Activated CD4-positive, alpha-beta T cell treated with anti-CD3 and anti-CD28 coated beads for 36 hours (primary cell): ENCODE measurements at regions of chr5 and their contacts with region 1.

Region 1: GRCh38 chr5:138654281-138654867 is 79.2 kb upstream of the HSPA9 start:
- DNase-seq: peak; percentile 81
- ATAC-seq: peak; percentile 97
- H3K4me3 Mint-ChIP-seq: no peak overlapping the region
- H3K27ac Mint-ChIP-seq: peak overlapping the region; percentile 28
- H3K4me1 Mint-ChIP-seq: peaks cover 24% of the 10 kb centered on the region
- H3K27me3 Mint-ChIP-seq: peaks cover 72% of the 10 kb centered on the region

Region 2: DNA sequence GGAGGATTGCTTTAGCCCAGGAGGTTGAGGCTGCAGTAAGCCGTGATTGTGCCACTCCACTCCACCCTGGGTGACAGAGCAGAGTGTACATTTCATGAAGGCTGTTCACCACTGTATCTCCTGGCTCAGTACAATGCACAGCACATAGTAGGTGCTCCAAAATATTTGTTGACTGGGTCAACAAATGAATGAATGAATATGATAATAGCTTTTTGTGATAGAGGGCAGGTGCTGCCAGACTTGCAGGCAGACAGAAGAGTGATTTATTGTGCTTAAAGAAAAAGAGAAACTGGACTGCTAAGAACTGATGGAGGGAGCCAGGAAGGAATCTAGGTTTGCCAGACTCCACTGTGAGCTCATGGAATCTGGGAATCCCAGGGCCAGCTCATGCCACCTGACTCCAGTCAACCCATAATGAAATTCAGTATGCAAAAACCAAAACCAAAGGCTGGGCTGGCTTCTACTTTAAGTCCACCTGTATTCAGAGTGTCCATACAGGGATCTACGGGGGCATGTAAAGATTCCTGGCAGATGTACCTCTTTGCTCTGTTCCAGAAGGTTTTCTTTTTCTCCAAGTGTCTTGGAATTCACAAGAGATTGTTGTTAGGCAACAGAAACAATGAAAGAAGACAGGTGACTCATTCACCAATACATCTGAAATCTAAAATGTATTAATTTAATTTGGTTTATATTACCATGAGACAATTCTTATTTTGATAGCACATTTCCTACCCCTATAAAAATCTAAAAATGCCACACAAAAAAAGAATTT is 83.3 kb after region 1 on chr5:
- CTCF ChIA-PET with region 1: no interaction called
- POLR2A ChIA-PET with region 1: interaction called, 10 read pairs
- intact Hi-C with region 1: loop called (anchors 2 to 5 kb)
- DNase-seq: no peak
- ATAC-seq: no peak
- H3K4me3 Mint-ChIP-seq: no peak overlapping the region
- H3K27ac Mint-ChIP-seq: no peak overlapping the region
- H3K4me1 Mint-ChIP-seq: peaks cover 33% of the 10 kb centered on the region
- H3K27me3 Mint-ChIP-seq: peaks cover 12% of the 10 kb centered on the region

Region 3: GRCh38 chr5:138743506-138743905 is 89.1 kb after region 1 on chr5:
- CTCF ChIA-PET with region 1: no interaction called
- POLR2A ChIA-PET with region 1: interaction called, 10 read pairs
- intact Hi-C with region 1: loop called (anchors 2 to 5 kb)
- DNase-seq: no peak
- ATAC-seq: no peak
- H3K4me3 Mint-ChIP-seq: no peak overlapping the region
- H3K27ac Mint-ChIP-seq: no peak overlapping the region
- H3K4me1 Mint-ChIP-seq: peaks cover 25% of the 10 kb centered on the region
- H3K27me3 Mint-ChIP-seq: peaks cover 6% of the 10 kb centered on the region

Region 4: DNA sequence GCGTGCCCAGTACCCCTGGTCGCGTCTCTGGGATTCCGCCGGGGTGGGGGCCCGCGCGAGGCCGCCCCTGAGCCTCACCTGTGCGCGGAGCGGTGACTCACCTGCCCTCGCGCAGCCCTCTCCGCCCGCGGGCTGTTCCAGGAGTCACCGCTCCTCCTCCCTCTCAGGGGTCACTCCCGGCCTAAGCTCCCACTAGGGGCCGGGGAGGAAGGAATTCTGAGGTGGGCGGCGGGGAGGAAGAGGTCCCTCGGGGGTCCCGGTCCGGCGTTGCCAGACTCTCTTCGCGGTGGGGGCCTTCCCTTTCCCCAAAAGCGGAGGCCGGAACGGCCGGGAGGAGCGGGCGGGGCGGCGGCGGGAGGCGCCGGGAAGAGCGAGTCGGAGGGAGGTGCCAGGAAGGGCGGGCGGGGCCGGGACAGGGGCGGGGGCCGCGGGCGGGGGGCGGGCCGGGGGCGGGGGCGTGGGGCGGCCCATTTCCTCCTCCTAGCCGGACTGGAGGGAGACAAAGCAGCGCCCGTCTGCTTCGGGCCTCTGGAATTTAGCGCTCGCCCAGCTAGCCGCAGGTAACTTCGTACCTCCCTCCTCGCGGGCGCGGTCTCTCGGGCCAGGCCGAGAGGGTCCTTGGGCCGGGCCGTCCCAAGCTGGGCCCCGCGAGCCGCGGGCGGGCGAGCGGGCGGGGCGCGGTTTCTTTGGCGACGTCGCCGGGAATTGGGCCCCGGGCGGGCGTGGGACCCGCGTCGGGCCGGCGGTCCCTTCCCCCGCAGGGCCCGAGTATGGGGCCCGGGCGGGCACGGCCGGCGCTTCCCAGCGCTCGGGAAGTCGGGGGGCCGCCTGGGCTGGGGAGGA is 98.8 kb after region 1 on chr5 and contains the start of gene CTNNA1:
- CTCF ChIA-PET with region 1: no interaction called
- POLR2A ChIA-PET with region 1: no interaction called
- intact Hi-C with region 1: loop called in 1 of 2 experiments (anchors 5 kb)
- DNase-seq: peak; percentile 77
- ATAC-seq: peak; percentile 60
- H3K4me3 Mint-ChIP-seq: peak within 1 kb of the TSS; percentile 73
- H3K27ac Mint-ChIP-seq: peak within 1 kb of the TSS; percentile 49
- H3K4me1 Mint-ChIP-seq: peaks cover 30% of the 10 kb centered on the region
- H3K27me3 Mint-ChIP-seq: peaks cover 30% of the 10 kb centered on the region
- total RNA-seq, gene CTNNA1: 78.8 to 86.7 TPM

Region 5: DNA sequence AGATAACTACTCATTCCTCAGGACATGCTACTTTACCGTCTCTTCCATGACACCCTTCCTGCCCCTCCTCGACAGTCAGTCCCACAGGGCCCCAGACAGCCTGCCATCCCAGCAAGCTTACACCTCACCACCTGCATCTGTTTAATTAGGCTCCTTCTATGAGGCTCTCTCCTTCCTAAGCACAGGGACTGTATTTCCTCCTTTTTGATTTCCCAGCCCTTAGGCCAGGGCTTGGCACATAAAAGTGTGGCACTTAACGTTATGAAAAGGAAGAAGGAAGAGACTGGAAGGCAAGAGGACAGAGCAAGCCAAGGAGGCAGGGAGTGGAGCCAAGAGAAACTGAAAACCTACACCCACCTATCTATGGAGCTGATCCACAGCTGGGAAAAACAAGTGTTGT is 397.0 kb after region 1 on chr5:
- CTCF ChIA-PET with region 1: no interaction called
- POLR2A ChIA-PET with region 1: no interaction called
- intact Hi-C with region 1: no loop called
- DNase-seq: no peak
- ATAC-seq: no peak
- H3K4me3 Mint-ChIP-seq: no peak overlapping the region
- H3K27ac Mint-ChIP-seq: no peak overlapping the region
- H3K4me1 Mint-ChIP-seq: no peaks in the 10 kb centered on the region
- H3K27me3 Mint-ChIP-seq: no peaks in the 10 kb centered on the region

Region 6: GRCh38 chr5:139147483-139148087 is 493.2 kb after region 1 on chr5:
- CTCF ChIA-PET with region 1: no interaction called
- POLR2A ChIA-PET with region 1: no interaction called
- intact Hi-C with region 1: loop called in 1 of 2 experiments (anchors 1 kb)
- DNase-seq: no peak
- ATAC-seq: no peak
- H3K4me3 Mint-ChIP-seq: no peak overlapping the region
- H3K27ac Mint-ChIP-seq: no peak overlapping the region
- H3K4me1 Mint-ChIP-seq: peaks cover 36% of the 10 kb centered on the region
- H3K27me3 Mint-ChIP-seq: no peaks in the 10 kb centered on the region

Region 7: DNA sequence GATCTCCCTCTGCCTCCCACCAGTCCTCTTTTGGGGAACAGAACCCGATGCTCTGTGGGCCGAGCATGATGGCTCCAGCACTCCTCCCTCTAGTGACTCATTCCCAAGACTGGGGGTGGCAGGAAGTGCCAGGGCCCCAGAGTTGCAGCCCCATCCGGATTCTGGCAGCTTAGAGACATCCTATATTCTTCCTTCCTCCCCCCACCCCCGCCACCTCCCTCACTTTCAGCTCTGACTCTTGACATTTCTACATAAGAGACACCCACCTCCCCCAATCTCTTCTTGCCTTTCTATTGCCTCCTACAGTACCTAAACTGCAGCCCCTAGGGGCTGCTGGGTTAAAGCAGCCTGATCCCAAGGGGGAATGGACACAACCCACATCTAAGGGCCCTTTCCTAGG is 592.0 kb after region 1 on chr5:
- CTCF ChIA-PET with region 1: no interaction called
- POLR2A ChIA-PET with region 1: no interaction called
- intact Hi-C with region 1: loop called in 1 of 2 experiments (anchors 5 kb)
- DNase-seq: peak; percentile 84
- ATAC-seq: peak; percentile 100
- H3K4me3 Mint-ChIP-seq: no peak overlapping the region
- H3K27ac Mint-ChIP-seq: peak overlapping the region; percentile 75
- H3K4me1 Mint-ChIP-seq: peaks cover 24% of the 10 kb centered on the region
- H3K27me3 Mint-ChIP-seq: peaks cover 2% of the 10 kb centered on the region